ENCODE measurements at regions of chr12 and their contacts with region 1.

Region 1: DNA sequence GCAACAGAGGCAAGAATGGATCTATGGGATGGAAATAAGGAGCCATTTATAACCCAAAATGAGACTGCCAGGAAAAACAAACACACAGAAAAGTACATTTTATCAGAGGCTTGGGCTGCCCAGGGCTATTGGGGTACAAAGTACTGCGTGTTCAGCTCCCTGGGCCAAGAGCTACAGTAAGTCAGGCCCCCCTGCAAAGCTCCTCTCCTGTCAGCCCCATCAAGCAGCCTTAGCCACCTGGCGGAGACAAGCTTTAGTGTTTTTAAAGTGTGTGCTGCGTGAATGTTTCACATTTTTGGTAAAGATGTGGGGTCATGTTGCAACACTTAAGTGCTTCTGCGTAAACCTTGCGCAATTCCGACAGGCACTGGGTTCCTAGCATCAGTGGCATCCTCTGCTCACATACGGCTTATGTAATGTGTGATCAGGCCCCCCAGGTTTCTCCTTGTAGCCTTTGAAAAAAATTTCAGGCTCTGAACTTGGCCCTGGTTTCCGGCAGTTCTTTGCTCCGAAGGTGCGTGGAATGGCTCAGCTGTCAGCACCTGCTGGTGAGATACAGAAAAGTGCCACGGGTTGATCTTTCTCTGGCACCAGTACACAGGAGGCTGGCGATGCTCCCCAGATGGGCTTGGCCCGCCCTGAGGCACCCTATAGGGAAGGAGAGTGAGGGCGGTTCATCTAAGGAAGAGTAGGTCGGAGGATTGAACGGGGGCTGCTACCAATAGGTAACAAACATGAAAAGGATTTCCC is 198.7 kb upstream of the EEA1 start:
- DNase-seq: peak; percentile 76
- H3K4me3 ChIP-seq: no peak overlapping the region
- H3K27me3 ChIP-seq: no peaks in the 10 kb centered on the region
- CTCF ChIP-seq: peak; percentile 68

Region 2: GRCh38 chr12:93115646-93116045 is 12.1 kb before region 1 on chr12:
- CTCF ChIA-PET with region 1: interaction called, 15 read pairs
- POLR2A ChIA-PET with region 1: no interaction called
- DNase-seq: no peak
- H3K4me3 ChIP-seq: no peak overlapping the region
- H3K27me3 ChIP-seq: no peaks in the 10 kb centered on the region
- CTCF ChIP-seq: no peak

Region 3: DNA sequence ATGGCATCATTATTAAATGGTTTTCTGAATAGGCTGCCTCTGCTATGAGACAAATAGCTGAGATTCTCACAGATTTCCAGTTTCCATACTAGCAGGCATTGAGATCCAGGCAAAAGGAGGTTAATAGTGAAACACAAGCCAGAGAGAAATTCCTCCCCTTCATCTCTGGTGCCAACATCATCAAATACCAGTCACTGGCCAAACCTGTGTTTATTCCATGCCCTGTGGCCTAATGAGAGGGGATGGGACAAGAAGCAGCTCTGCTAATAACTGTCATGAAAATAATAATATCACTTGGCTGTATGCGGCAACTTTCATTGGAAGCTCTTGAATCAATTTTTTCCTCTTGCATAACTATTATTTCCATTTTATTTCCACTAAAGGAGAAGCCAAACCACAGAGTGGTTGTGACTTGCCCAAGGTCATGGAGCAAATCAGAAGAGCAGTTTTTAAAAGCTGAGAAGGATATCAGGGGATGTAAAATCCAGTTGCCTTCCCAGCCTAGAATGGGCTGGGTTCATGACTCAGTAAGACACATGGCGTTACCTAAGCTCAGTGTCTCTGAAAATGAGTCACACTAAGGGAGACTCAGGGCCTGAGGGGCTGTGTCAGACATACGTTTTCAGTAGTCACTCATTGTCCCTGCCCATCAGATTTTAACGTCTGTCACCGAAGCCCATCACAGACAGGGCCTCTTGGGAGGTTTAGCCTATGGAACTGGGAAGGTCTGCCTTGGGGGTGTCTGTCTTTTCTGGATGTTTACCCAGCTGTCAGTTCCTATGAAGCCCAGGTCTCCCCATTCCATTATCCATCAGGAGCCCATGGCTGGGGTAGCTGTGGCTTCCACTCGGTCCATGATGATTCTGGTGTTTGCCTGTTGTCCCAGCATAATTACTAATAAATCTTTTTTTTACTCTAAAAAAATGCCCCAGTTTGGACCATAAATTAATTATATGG is 10.2 kb after region 1 on chr12:
- CTCF ChIA-PET with region 1: interaction called, 13 read pairs
- POLR2A ChIA-PET with region 1: no interaction called
- DNase-seq: peak; percentile 74
- H3K4me3 ChIP-seq: no peak overlapping the region
- H3K27me3 ChIP-seq: no peaks in the 10 kb centered on the region
- CTCF ChIP-seq: no peak

Region 4: GRCh38 chr12:93380480-93381121 is 252.8 kb after region 1 on chr12:
- CTCF ChIA-PET with region 1: interaction called, 14 read pairs
- POLR2A ChIA-PET with region 1: no interaction called
- DNase-seq: no peak
- H3K4me3 ChIP-seq: peak overlapping the region; percentile 90
- H3K27me3 ChIP-seq: no peaks in the 10 kb centered on the region
- CTCF ChIP-seq: peak; percentile 21; the same call in 1 of the 2 replicates

Measured in BJ (cell line).